Heart right ventricle (tissue), 16 donors: ENCODE measurements at regions of chr11 and their contacts with region 1.

Region 1: DNA sequence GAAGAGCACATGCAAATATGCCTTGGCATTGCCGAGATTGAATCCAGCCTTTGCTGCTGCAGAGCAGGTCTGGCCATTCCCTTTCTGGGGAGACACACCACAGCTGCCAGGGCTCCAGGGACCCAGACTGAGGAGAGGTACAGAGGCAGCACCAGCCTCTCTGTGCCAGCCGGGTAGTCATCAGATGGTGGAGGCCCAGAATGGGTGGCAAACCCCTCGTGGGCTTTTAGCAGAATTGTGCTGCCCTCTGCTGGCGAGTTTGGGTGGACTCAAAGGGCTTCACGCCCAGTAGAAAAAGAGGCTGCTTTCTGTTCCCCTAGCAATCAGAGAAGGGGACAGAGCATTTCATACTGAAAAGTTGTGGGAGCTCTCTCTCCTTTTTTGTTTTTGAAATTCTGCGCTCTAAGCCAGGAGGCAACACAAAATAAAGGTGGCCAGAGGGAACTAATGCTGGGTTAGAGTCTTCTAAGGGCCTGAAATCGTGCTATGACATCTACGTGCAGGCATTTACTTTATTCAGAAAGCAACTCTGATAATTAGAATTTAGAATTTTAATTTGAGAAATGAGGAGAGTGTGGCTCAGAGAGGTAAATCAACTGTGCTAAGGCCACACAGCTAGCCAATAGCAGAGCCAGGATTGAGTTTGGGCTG is 158.8 kb upstream of the NAV2 start:
- DNase-seq: peak; percentile 78 to 81
- ATAC-seq: peak; percentile 55 to 86 (median 82)
- H3K4me3 ChIP-seq: no peak overlapping the region
- H3K27ac ChIP-seq: no peak overlapping the region
- H3K4me1 ChIP-seq: peaks cover 0 to 14% (median 0%) of the 10 kb centered on the region in 9 donors
- H3K27me3 ChIP-seq: no peaks in the 10 kb centered on the region
- CTCF ChIP-seq: peak; percentile 71 to 95 (median 92)

Region 2: DNA sequence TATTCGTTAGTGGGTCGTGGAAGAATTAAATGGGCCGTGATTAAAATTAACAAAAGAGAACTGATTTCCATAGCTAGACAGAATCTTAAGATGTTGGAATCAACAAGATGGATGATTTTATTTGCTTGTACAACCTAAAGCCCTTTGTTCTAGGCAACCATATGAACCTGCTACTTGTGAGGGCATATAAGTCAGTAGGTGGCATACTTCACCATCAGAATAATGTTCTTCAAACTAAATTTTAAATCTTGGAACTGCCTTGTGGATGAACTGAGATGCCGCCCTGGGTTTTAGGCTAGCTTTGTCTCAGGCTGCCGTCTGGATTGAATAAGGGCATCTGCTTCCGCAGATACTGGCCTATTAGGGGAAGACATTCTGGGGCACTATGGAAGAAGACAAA is 393.0 kb before region 1 on chr11:
- intact Hi-C with region 1: loop called in 7 of 10 experiments (anchors 5 to 10 kb)
- DNase-seq: no peak
- ATAC-seq: no peak
- H3K4me3 ChIP-seq: no peak overlapping the region
- H3K27ac ChIP-seq: no peak overlapping the region
- H3K4me1 ChIP-seq: no peaks in the 10 kb centered on the region
- H3K27me3 ChIP-seq: no peaks in the 10 kb centered on the region
- CTCF ChIP-seq: peak in 4 of 9 donors; percentile 24 to 44 (median 36)

Region 3: GRCh38 chr11:19311308-19312030 is 242.3 kb before region 1 on chr11:
- intact Hi-C with region 1: loop called (anchors 1 to 5 kb)
- DNase-seq: peak; percentile 53 to 71
- ATAC-seq: peak; percentile 83 to 91 (median 86)
- H3K4me3 ChIP-seq: no peak overlapping the region
- H3K27ac ChIP-seq: no peak overlapping the region
- H3K4me1 ChIP-seq: peaks cover 0 to 5% (median 0%) of the 10 kb centered on the region in 9 donors
- H3K27me3 ChIP-seq: peaks cover 0 to 8% (median 0%) of the 10 kb centered on the region in 7 donors
- CTCF ChIP-seq: peak; percentile 60 to 89 (median 83)

Region 4: DNA sequence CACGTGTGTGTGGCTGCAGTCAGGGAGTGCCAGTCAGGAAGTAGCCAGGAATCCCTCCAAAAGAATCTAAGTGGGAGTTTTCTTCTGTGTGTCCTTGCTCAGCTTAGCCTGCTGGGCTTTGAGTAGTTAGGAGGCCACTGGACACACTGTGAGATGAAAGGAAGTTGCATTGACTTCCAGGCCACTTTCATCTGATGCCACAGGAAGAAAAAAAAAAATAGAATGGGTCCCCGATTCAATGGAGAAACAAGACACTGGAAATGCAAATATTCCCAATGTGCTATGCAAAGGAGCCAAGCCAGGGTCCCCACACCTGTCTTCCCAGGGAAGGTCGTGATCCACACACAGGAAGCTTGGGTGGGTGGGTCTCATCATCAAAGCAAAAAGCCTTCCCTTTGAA is 217.5 kb before region 1 on chr11:
- intact Hi-C with region 1: no loop called
- DNase-seq: no peak
- ATAC-seq: no peak
- H3K4me3 ChIP-seq: no peak overlapping the region
- H3K27ac ChIP-seq: no peak overlapping the region
- H3K4me1 ChIP-seq: no peaks in the 10 kb centered on the region
- H3K27me3 ChIP-seq: peaks cover 0 to 52% (median 29%) of the 10 kb centered on the region in 7 donors
- CTCF ChIP-seq: no peak

Region 5: GRCh38 chr11:19903620-19904069 is 349.8 kb after region 1 on chr11:
- intact Hi-C with region 1: loop called in 4 of 10 experiments (anchors 1 to 2 kb)
- DNase-seq: peak; percentile 37 to 72
- ATAC-seq: peak; percentile 50 to 80 (median 67)
- H3K4me3 ChIP-seq: no peak overlapping the region
- H3K27ac ChIP-seq: no peak overlapping the region
- H3K4me1 ChIP-seq: peaks cover 0 to 20% (median 4%) of the 10 kb centered on the region in 9 donors
- H3K27me3 ChIP-seq: no peaks in the 10 kb centered on the region
- CTCF ChIP-seq: peak; percentile 62 to 87 (median 82)

Region 6: GRCh38 chr11:20355221-20356219 is 801.7 kb after region 1 on chr11:
- intact Hi-C with region 1: loop called in 1 of 10 experiments (anchors 10 kb)
- DNase-seq: no peak
- ATAC-seq: peak in 3 of 8 donors; percentile 54 to 72 (median 63)
- H3K4me3 ChIP-seq: no peak overlapping the region
- H3K27ac ChIP-seq: no peak overlapping the region
- H3K4me1 ChIP-seq: peaks cover 0 to 14% (median 0%) of the 10 kb centered on the region in 9 donors
- H3K27me3 ChIP-seq: peaks cover 0 to 17% (median 0%) of the 10 kb centered on the region in 7 donors
- CTCF ChIP-seq: peak; percentile 13 to 58 (median 50)